Common myeloid progenitor, CD34-positive (primary cell): ENCODE measurements at regions of chr2 and their contacts with region 1.

Region 1: DNA sequence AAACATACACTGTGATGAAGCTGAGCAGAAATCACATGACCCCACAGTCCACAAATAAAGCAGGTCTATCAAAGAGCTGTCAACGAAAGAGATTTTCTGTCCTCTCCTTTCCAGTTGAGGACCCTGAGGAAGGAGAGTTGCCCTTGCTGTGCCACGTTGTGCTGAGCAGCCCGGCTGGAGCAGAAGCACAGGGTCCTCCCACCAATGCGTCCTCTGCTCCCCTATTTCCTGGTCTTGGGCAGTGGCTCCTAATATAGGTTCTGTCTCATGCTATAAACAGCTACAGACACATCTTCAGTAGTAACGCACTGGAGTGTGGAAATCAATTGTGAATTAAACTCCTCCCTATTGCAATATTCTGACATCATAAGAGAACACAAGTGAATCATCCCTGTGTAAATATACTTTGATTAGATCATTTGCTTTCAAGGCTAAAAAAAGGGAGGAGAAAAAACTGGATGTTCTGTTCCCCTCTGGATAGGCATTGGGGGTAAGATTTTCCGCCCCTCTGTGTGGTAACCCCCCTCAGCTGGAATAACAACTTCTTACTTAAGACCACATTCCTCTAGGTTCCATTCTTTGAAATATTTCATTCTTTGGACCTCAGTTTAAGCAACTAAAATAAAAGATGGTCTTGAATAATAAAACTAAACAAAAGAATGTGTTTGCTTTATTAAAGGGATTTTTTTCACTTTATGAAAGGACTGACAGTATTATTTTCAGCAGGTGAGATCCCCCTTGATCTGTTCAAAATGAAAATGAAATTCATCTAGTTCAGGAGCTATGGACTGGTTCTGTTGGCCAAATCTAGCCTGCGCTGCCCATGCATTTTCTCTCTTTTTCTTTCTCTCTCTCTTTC is 8.3 kb upstream of the RHOB start:
- DNase-seq: no peak
- H3K4me3 ChIP-seq: no peak overlapping the region
- H3K27ac ChIP-seq: no peak overlapping the region
- H3K4me1 ChIP-seq: peaks cover 2 to 16% (median 8%) of the 10 kb centered on the region in 4 experiments
- H3K27me3 ChIP-seq: peaks cover 0 to 4% (median 0%) of the 10 kb centered on the region in 5 experiments

Region 2: DNA sequence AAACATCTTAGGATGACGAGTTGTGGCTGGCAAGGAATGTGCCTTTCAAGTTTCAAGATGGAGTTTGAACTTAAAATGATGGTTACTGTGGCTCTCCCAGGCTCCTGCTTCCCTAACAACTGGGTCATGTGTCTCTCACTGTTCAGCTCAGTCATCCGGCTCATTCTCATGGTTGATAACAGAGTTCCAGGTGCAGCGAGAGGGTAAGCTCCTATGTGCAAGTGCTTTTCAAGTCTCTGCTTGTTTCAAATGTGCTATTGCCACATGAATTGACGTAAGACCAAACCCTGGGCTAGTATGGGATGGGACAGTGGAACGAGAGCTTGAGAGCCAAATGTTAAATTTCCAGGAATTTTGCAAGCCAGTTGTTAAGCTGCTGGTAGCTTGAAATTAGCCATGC is 68.4 kb before region 1 on chr2:
- CTCF ChIA-PET with region 1: no interaction called
- POLR2A ChIA-PET with region 1: no interaction called
- DNase-seq: no peak
- H3K4me3 ChIP-seq: no peak overlapping the region
- H3K27ac ChIP-seq: no peak overlapping the region
- H3K4me1 ChIP-seq: no peaks in the 10 kb centered on the region
- H3K27me3 ChIP-seq: no peaks in the 10 kb centered on the region

Region 3: DNA sequence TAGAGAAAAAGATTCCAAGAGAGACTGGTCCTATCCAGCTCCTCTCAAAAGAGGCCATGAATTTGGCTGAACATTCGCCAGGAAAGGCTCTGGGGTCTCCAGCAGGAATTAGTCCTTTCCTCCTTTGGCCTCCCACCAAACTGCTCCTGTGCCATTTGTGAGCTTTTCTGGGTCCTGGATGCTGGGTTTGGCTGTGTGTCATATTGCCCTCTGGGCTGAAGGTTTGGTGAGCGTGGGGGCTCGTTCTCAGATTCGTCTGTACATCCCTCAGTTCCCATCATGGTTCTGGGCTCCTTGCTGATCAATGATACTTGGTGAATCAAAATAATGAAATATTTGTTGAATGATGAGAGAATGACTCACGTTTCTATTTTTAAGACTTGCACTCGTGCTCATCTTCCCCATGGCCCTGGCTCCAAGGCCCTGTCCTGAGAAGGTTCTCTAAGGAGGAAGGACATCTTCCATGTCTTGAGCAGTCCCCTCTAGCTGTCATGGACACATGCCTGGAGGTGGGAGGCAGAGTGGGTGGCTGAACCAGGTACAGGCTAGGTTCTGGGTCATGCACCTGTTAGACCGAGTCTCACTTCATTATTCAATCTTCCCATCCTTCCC is 39.5 kb before region 1 on chr2:
- CTCF ChIA-PET with region 1: interaction called, 16 read pairs
- POLR2A ChIA-PET with region 1: no interaction called
- DNase-seq: no peak
- H3K4me3 ChIP-seq: no peak overlapping the region
- H3K27ac ChIP-seq: no peak overlapping the region
- H3K4me1 ChIP-seq: no peaks in the 10 kb centered on the region
- H3K27me3 ChIP-seq: no peaks in the 10 kb centered on the region

Region 4: DNA sequence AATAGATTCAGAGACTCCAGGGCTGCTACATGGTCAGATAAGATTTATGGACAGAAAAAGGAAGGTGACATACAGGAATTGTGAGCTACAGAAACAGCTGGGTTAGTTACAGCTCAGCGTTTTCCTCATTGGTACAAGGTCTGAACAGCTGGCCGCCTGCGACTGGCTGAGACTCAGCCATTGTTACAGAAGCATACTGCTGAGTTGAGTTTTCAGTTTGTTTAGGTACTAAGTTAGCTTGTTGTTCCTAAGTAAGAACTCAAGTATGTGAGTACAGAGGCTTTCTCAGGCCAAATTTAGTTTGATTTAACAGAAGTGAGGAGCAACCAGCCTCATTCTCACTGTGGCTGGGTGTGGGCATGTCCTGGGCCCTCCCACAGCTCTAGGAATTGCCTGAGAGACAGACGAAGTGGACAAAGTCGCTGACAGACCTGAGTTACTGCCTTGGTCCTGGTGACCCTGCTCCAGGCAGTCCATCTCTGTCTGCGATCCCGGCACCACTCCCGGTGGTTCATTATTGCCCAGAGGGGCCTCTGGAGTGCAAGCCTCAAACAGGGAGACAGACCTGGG is 19.5 kb before region 1 on chr2:
- CTCF ChIA-PET with region 1: interaction called, 113 read pairs
- POLR2A ChIA-PET with region 1: no interaction called
- DNase-seq: peak in 2 of 3 donors; percentile 31 to 46
- H3K4me3 ChIP-seq: no peak overlapping the region
- H3K27ac ChIP-seq: no peak overlapping the region
- H3K4me1 ChIP-seq: peaks cover 5 to 44% (median 29%) of the 10 kb centered on the region in 4 experiments
- H3K27me3 ChIP-seq: no peaks in the 10 kb centered on the region

Region 5: GRCh38 chr2:20424300-20425290 is 14.0 kb before region 1 on chr2:
- CTCF ChIA-PET with region 1: interaction called, 113 read pairs
- POLR2A ChIA-PET with region 1: interaction called, 4 read pairs
- DNase-seq: peak; percentile 43 to 94 (median 89)
- H3K4me3 ChIP-seq: peak overlapping the region in 4 of 7 experiments; percentile 12 to 44 (median 42)
- H3K27ac ChIP-seq: peak overlapping the region in 1 of 2 experiments; percentile 23
- H3K4me1 ChIP-seq: peaks cover 11 to 44% (median 25%) of the 10 kb centered on the region in 4 experiments
- H3K27me3 ChIP-seq: no peaks in the 10 kb centered on the region

Region 6: DNA sequence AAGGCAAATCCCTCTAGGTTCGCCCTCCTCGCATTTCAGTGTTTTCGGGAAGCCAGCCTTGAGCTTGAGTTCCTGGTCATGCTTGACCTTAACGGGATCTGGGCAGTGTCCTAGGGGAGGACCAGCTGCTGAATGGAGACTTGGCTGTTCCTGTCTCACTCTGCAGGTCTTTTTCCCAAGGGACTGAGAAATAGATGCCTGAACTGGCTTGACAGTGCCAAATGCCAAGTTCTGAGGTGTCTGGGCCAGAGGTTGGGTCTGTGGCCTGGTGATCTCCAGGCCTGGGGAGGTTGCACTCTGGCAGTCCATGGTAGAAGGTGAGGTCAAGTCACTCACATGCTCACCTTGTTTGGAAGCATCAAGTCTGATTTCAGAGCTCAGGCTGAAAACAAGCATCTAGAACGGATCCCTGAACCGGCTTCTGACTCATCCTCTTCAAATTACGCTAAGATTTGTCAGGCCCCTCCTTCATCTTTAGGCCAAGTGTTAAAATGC is 27.9 kb after region 1 on chr2:
- CTCF ChIA-PET with region 1: no interaction called
- POLR2A ChIA-PET with region 1: no interaction called
- DNase-seq: no peak
- H3K4me3 ChIP-seq: no peak overlapping the region
- H3K27ac ChIP-seq: no peak overlapping the region
- H3K4me1 ChIP-seq: no peaks in the 10 kb centered on the region
- H3K27me3 ChIP-seq: peaks cover 0 to 3% (median 0%) of the 10 kb centered on the region in 5 experiments

Region 7: DNA sequence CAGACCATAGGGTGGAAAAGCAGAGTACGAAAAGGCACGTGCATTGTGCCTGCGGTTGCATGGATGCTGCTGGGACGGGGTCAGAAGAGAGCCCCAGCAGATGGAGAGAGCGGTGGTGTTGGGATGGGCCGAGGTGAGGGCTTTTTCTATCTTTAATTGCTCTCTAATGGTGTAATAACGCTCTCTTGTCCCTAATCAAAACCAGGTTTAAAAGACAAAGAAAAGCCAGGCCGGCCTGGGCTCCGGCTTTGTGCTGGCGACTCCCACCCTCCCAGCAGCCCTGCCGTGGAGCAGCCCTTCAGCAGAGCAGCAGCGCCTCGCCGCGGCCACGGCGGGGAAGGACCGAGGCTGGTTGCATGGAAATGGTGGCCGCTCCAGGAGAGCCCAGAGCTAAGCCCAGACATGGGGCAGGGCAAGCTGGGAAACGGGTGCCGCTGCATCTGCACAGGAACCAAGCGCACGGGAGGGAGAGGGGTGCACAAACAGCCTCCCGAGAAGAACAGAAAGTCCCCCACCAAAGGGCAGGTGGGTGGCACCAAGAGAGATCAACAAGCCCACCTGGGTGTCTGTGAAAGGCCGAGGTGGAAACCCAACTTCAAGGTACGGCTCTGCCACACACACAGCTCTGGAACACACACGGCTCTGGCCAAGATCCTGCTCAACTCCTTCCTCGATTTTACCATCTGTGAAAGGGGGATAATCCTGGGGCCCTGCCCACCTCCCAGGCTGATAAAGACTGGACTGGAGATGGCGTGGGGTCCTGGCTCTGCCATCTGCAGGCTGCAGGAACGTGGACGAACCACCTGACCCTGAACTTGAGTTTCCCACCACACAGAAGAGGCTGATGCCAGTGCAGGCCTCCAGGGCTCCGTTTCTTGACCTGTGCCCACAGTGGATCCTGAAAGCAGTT is 197.4 kb after region 1 on chr2:
- CTCF ChIA-PET with region 1: interaction called, 59 read pairs
- POLR2A ChIA-PET with region 1: no interaction called
- DNase-seq: peak; percentile 52 to 76 (median 76)
- H3K4me3 ChIP-seq: no peak overlapping the region
- H3K27ac ChIP-seq: no peak overlapping the region
- H3K4me1 ChIP-seq: peaks cover 0 to 14% (median 2%) of the 10 kb centered on the region in 4 experiments
- H3K27me3 ChIP-seq: no peaks in the 10 kb centered on the region

Region 8: GRCh38 chr2:20642055-20642971 is 203.8 kb after region 1 on chr2:
- CTCF ChIA-PET with region 1: interaction called, 59 read pairs
- POLR2A ChIA-PET with region 1: no interaction called
- DNase-seq: peak; percentile 53 to 77 (median 76)
- H3K4me3 ChIP-seq: no peak overlapping the region
- H3K27ac ChIP-seq: no peak overlapping the region
- H3K4me1 ChIP-seq: peaks cover 0 to 6% (median 0%) of the 10 kb centered on the region in 4 experiments
- H3K27me3 ChIP-seq: no peaks in the 10 kb centered on the region

Region 9: DNA sequence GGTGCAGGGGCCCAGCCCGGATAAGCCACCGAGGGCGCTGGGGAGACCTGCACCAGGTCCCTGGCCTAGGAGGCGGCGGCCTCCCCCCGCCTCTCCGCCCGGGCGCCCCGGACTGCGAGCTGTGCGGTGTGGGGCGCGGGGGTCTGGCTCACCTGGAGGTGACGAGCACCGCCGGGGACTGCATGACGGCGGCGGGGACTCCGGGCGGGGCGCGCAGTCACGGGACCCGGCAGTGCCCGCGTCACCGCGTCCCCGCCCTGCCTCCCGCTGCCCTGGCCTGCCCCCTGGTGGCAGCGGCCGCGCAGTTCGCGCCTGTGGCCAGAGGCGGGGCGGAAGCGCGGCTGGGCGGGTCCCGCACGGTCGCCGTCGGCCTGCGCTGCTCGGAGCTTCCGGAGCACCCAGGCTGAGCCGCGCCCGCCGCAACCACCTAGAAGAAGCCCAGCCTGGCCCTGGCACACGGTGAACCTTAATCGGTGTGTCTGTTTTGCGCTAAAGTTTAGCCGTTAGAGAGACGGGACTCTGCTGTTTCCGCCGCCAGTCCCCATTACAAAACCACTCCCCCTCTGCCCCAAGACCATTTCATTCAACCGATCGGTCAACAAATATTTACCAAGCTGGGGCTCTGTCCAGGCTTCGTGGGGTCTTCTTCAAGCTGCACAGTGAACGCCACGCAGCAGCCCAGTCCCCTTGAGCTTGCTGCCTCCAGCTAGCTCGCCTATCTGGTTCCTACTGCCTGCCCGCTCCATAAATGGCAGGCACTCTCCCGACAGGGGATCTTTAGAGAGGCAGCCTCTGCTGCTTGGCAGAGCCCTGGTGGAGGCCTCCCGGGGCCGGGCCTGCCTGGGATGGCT is 212.5 kb after region 1 on chr2 and contains the start of gene HS1BP3:
- CTCF ChIA-PET with region 1: interaction called, 11 read pairs
- POLR2A ChIA-PET with region 1: interaction called, 3 read pairs
- DNase-seq: peak; percentile 83 to 91 (median 91)
- H3K4me3 ChIP-seq: peak within 1 kb of the TSS; percentile 74 to 89 (median 81)
- H3K27ac ChIP-seq: peak within 1 kb of the TSS; percentile 64 to 88
- H3K4me1 ChIP-seq: peaks cover 2 to 29% (median 19%) of the 10 kb centered on the region in 4 experiments
- H3K27me3 ChIP-seq: no peaks in the 10 kb centered on the region